AG04450 (cell line): ENCODE measurements at regions of chr9 and their contacts with region 1.

Region 1: GRCh38 chr9:136380381-136380780 is 6.9 kb upstream of the CARD9 start:
- DNase-seq: no peak
- H3K4me3 ChIP-seq: no peak overlapping the region
- H3K27ac ChIP-seq: no peak overlapping the region
- H3K27me3 ChIP-seq: no peaks in the 10 kb centered on the region
- CTCF ChIP-seq: no peak

Region 2: DNA sequence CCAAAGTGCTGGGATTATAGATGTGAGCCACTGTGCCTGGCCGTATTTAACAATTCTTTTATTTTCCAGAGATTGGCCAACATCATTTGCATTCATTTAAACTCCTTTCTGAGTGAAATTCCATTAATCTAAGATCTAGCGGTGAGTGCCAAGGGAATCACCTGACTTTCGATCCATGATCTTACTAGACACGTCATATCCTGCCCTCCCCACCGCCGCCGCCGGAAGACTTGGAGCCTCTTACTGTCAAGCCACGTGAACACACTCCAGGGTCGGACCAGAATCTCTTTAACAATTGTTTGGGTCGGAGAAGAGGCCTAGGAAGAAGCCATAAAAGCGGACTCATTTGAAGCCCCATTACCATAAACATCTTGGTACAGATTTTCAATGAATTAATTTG is 46.4 kb after region 1 on chr9:
- CTCF ChIA-PET with region 1: no interaction called
- POLR2A ChIA-PET with region 1: interaction called, 12 read pairs
- DNase-seq: no peak
- H3K4me3 ChIP-seq: no peak overlapping the region
- H3K27ac ChIP-seq: no peak overlapping the region
- H3K27me3 ChIP-seq: no peaks in the 10 kb centered on the region
- CTCF ChIP-seq: no peak